HEK293T (cell line): ENCODE measurements at regions of chr10 and their contacts with region 1.

Region 1: GRCh38 chr10:13299437-13300287 is at the start of gene PHYH:
- DNase-seq: peak; percentile 69

Region 2: DNA sequence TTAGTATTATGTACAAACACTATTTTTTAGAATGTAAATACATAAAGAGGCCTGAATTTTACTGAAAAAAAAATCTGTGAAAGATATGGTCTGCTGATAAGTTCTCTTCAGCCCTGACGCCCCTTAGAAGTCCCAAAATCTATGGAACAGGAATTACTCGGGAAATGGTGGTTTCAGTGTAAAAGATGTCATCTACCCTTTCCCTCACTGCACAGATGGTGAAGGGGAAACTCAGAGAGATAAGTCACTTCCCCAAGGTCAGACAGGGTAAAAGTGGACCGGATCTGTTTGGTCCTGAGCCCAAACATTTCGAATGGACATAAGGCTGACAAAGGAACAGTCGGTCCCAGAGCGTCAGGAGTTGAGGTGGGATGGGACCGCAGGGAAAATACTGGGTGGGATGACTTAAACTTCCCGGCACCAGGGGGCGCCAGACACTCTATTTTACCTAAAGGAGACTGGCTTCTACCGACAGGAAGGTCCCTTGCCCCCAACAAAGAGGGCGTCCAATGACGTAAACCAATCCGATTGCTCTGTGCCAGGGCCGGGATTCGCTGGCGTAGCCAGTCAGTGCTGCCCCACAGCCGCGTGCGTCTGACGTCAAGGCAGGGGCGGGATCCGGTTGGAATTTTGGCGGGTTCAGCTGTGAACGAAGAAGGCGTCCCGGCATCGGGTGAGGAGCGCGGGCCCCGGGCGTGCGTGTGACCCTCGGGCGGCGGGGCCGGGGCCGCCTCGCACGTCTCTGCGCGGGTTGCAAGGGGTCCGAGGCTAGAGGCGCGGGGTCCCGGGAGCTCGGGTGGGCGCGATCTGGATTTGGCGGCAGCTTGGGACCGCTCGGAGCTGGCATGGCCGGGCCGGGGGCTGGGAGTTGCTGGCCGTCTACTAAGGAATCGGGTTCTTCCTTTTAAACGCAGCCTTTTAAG is 138.5 kb before region 1 on chr10 and contains the start of gene MCM10:
- CTCF ChIA-PET with region 1: interaction called, 3 read pairs
- POLR2A ChIA-PET with region 1: interaction called, 13 read pairs
- DNase-seq: peak; percentile 98

Region 3: DNA sequence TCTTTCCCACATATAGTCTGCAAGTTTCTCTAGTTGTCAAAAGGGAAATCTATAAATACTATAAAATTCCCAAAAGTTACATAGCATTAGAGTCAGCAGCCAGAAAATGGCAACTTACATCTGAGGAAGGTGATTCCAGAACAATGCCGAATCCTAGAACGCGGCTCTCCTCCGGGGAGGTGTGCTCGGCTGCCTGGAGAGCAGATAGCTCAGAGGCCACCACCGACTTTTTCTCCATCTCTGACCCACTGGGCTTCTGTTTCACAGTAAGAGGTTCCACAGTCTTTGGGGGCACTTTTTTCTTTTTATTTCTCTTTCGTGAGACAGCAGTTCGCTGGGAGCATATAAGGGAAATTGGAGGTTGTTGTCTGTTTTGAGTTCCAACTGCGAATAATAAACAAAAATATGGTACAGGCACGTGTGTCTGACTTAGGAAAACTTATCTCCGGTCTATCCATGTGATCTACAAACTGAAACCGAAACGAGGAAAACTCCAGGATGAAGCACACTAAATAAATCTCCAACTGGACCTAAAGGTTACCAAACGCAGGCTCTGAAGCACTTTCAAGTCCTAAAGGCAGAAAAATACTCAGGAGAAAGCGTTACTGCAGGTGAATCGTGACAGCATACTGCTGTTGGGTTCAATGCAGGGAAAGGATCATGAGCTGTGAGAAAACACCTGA is 193.0 kb after region 1 on chr10:
- CTCF ChIA-PET with region 1: no interaction called
- POLR2A ChIA-PET with region 1: no interaction called
- DNase-seq: no peak